ENCODE measurements at regions of chr1 and their contacts with region 1.

Region 1: GRCh38 chr1:233487415-233487814 is 126.5 kb upstream of the KCNK1 start:
- DNase-seq: no peak
- ATAC-seq: peak; percentile 89
- H3K4me3 ChIP-seq: no peak overlapping the region
- H3K27ac ChIP-seq: no peak overlapping the region
- H3K4me1 ChIP-seq: no peaks in the 10 kb centered on the region
- H3K27me3 ChIP-seq: no peaks in the 10 kb centered on the region
- CTCF ChIP-seq: no peak
- EP300 ChIP-seq: peak in 1 of 2 experiments; percentile 38; a peak in 1 of 4 replicates
- POLR2A ChIP-seq: no peak
- RAD21 ChIP-seq: no peak

Region 2: GRCh38 chr1:233166896-233167295 is 320.5 kb before region 1 on chr1:
- CTCF ChIA-PET with region 1: no interaction called
- POLR2A ChIA-PET with region 1: no interaction called
- RAD21 ChIA-PET with region 1: no interaction called
- SMC1A ChIA-PET with region 1: no interaction called
- in situ Hi-C with region 1: no loop called
- intact Hi-C with region 1: no loop called
- DNase-seq: no peak
- ATAC-seq: no peak
- H3K4me3 ChIP-seq: no peak overlapping the region
- H3K27ac ChIP-seq: no peak overlapping the region
- H3K4me1 ChIP-seq: no peaks in the 10 kb centered on the region
- H3K27me3 ChIP-seq: no peaks in the 10 kb centered on the region
- CTCF ChIP-seq: no peak
- EP300 ChIP-seq: no peak
- POLR2A ChIP-seq: no peak
- RAD21 ChIP-seq: no peak

Region 3: DNA sequence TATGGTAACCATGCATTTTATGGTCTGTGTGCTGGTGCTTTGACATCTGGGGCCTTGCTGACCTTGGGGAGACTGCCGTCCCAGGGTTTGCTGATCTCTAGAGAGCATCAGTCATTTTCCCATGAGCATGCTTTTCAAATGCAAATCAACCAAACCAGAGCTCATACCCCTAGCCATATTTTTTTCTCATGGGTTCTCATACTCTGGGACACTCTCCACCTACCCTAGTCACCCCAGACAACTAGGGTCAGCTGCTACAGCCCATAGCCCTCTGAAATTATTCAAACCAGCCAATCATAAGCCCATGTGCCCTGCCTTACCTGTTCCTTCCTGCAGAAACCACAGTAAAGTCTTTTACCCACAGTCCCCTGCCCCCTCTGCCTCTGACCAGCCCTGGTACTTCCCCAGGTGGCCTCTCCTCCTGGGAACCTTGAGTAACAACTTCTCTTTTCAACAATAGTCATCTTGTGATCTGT is 27.9 kb before region 1 on chr1:
- CTCF ChIA-PET with region 1: interaction called, 3 read pairs
- POLR2A ChIA-PET with region 1: interaction called, 3 read pairs
- RAD21 ChIA-PET with region 1: interaction called, 6 read pairs
- SMC1A ChIA-PET with region 1: interaction called, 13 read pairs
- in situ Hi-C with region 1: no loop called
- intact Hi-C with region 1: no loop called
- DNase-seq: peak; percentile 83
- ATAC-seq: peak; percentile 90
- H3K4me3 ChIP-seq: no peak overlapping the region
- H3K27ac ChIP-seq: no peak overlapping the region
- H3K4me1 ChIP-seq: peaks cover 8% of the 10 kb centered on the region
- H3K27me3 ChIP-seq: no peaks in the 10 kb centered on the region
- CTCF ChIP-seq: no peak
- EP300 ChIP-seq: peak; percentile 59 to 60; a peak in 3 of 4 replicates
- POLR2A ChIP-seq: no peak
- RAD21 ChIP-seq: no peak

Measured in GM12878 (cell line).